K562 (cell line): ENCODE measurements at regions of chr1 and their contacts with region 1.

Region 1: DNA sequence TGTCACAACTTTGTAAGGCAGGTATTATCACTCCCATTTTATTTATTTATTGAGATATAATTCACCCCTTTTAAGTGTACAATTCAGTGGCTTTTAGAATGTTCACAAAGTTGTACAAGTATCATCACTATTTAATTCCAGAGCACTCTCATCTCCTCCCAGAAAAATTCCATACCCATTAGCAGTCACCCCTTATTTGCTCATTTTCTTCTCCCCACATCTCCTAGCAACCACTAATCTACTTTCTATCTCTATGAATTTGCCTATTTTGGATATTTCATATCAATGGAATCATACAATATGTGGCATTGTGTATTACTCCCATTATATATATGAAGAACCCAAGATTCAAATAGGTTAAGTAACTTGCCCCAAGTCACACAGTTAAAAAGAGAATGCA is 7.0 kb downstream of the DSTYK start:
- DNase-seq: no peak
- ATAC-seq: no peak
- H3K4me3 ChIP-seq: no peak overlapping the region
- H3K27ac ChIP-seq: no peak overlapping the region
- H3K4me1 ChIP-seq: peaks cover 0 to 19% of the 10 kb centered on the region in 2 experiments; a peak in 4 of 5 replicates
- H3K27me3 ChIP-seq: no peaks in the 10 kb centered on the region
- CTCF ChIP-seq: no peak
- EP300 ChIP-seq: no peak
- POLR2A ChIP-seq: no peak
- RAD21 ChIP-seq: no peak

Region 2: DNA sequence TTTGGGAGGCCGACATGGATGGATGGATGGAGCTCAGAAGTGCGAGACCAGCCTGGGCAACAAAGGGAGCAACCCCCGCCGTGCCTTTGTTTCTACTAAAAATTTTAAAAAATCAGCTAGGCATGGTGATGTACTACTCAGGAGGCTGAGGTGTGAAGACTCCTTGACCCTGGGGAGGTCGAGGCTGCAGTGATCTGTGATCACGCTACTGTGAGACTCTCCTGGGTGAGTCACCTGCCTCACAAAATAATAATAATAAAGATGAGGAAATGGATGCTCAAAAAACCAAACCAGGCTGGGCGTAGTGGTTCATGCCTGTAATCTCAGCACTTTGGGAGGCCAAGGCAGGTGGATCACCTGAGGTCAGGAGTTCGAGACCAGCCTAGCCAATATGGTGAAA is 12.3 kb before region 1 on chr1:
- CTCF ChIA-PET with region 1: no interaction called
- POLR2A ChIA-PET with region 1: interaction called, 28 read pairs
- in situ Hi-C with region 1: no loop called
- intact Hi-C with region 1: no loop called
- DNase-seq: no peak
- ATAC-seq: no peak
- H3K4me3 ChIP-seq: no peak overlapping the region
- H3K27ac ChIP-seq: no peak overlapping the region
- H3K4me1 ChIP-seq: peaks cover 0 to 39% of the 10 kb centered on the region in 2 experiments; a peak in 4 of 5 replicates
- H3K27me3 ChIP-seq: no peaks in the 10 kb centered on the region
- CTCF ChIP-seq: no peak
- EP300 ChIP-seq: no peak
- POLR2A ChIP-seq: no peak
- RAD21 ChIP-seq: no peak

Region 3: GRCh38 chr1:205344066-205344928 is 139.7 kb after region 1 on chr1:
- CTCF ChIA-PET with region 1: no interaction called
- POLR2A ChIA-PET with region 1: no interaction called
- in situ Hi-C with region 1: no loop called
- intact Hi-C with region 1: no loop called
- DNase-seq: peak; percentile 59 to 74 (median 67)
- ATAC-seq: peak; percentile 81
- H3K4me3 ChIP-seq: peak overlapping the region; percentile 15; the same call in 1 of the 2 replicates
- H3K27ac ChIP-seq: no peak overlapping the region
- H3K4me1 ChIP-seq: peaks cover 11 to 19% of the 10 kb centered on the region in 2 experiments
- H3K27me3 ChIP-seq: peaks cover 42 to 70% of the 10 kb centered on the region in 2 experiments
- CTCF ChIP-seq: no peak
- EP300 ChIP-seq: peak; percentile 67
- POLR2A ChIP-seq: no peak
- RAD21 ChIP-seq: no peak